ENCODE measurements at regions of chrX and their contacts with region 1.

Region 1: GRCh38 chrX:39149761-39150160 is 348.5 kb downstream of the MID1IP1 start:
- DNase-seq: no peak
- H3K4me3 Mint-ChIP-seq: no peak overlapping the region
- H3K27ac Mint-ChIP-seq: no peak overlapping the region
- H3K4me1 Mint-ChIP-seq: peaks cover 5% of the 10 kb centered on the region
- H3K27me3 Mint-ChIP-seq: no peaks in the 10 kb centered on the region

Region 2: DNA sequence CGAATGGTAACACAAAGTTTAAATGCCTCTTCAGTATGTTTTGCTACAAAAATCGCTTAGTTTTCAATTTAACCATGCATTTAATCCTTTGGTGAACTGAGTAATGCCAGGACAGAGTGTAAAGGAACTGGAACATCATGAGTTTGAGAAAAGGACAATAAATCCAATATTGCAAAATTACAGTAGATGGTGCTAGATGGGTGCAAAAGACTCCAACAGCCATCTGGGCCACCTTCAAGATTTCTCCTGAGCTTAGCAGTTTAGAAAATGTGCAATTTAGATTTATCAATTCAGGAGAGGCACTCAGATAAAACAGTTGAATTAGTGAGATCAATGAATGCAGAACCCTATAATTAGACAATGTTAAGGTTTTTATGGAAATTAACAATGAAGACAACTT is 381.7 kb before region 1 on chrX:
- intact Hi-C with region 1: loop called (anchors 5 kb)
- DNase-seq: no peak
- H3K4me3 Mint-ChIP-seq: no peak overlapping the region
- H3K27ac Mint-ChIP-seq: no peak overlapping the region
- H3K4me1 Mint-ChIP-seq: no peaks in the 10 kb centered on the region
- H3K27me3 Mint-ChIP-seq: peaks cover 7% of the 10 kb centered on the region

Region 3: DNA sequence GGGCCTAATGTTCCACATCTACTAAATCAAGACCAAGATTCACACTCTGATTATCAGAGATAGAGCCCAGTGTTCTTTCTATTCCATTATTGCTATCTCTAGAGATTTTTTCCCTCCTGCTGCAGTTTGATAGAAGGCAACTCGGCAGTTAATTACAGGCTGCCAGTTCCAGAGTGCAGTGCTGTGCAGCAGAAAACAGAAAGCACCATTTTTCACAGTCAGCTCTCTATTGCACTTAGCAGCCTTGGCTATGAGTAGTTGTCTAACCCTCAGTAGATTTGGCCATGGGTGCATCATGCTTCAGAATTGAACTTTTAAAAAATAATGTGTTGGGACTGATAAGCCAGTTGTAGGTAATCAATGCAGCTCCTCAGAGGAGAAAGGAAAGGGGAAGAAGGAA is 53.2 kb before region 1 on chrX:
- intact Hi-C with region 1: loop called (anchors 10 kb)
- DNase-seq: no peak
- H3K4me3 Mint-ChIP-seq: no peak overlapping the region
- H3K27ac Mint-ChIP-seq: no peak overlapping the region
- H3K4me1 Mint-ChIP-seq: peaks cover 4% of the 10 kb centered on the region
- H3K27me3 Mint-ChIP-seq: no peaks in the 10 kb centered on the region

Measured in activated T-helper 2 cell treated with anti-CD3 and anti-CD28 coated beads, Interferon-gamma antibody, Interleukin-2, Interleukin-4, amounts not matched to agents 10 μg/mL and 5 μg/mL and 100 μg/mL, durations not matched to agents 14 hours and 24 hours and 36 hours (primary cell).